Activated T-helper 1 cell treated with anti-CD3 and anti-CD28 coated beads, Interleukin-12 subunit alpha, Interleukin-12 subunit beta, Interleukin-2, Interleukin-4 antibody, amounts not matched to agents 30 ng/mL and 10 ng/mL and 1 ng/mL, durations not matched to agents 14 hours and 24 hours and 36 hours (primary cell): ENCODE measurements at regions of chr4 and their contacts with region 1.

Region 1: GRCh38 chr4:25159884-25160713 is at the start of gene SEPSECS:
- DNase-seq: peak; percentile 93
- H3K4me3 Mint-ChIP-seq: peak within 1 kb of the TSS; percentile 91
- H3K27ac Mint-ChIP-seq: peak within 1 kb of the TSS; percentile 90
- H3K4me1 Mint-ChIP-seq: peaks cover 36% of the 10 kb centered on the region
- H3K27me3 Mint-ChIP-seq: peaks cover 3% of the 10 kb centered on the region
- total RNA-seq, gene SEPSECS: 13.4 and 15.3 TPM in 2 replicates

Region 2: GRCh38 chr4:24980064-24980690 is 179.9 kb before region 1 on chr4:
- intact Hi-C with region 1: loop called (anchors 5 kb)
- DNase-seq: peak; percentile 40
- H3K4me3 Mint-ChIP-seq: no peak overlapping the region
- H3K27ac Mint-ChIP-seq: no peak overlapping the region
- H3K4me1 Mint-ChIP-seq: peaks cover 5% of the 10 kb centered on the region
- H3K27me3 Mint-ChIP-seq: peaks cover 12% of the 10 kb centered on the region

Region 3: GRCh38 chr4:25180524-25181131 is 20.5 kb after region 1 on chr4:
- intact Hi-C with region 1: loop called (anchors 1 kb)
- DNase-seq: no peak
- H3K4me3 Mint-ChIP-seq: no peak overlapping the region
- H3K27ac Mint-ChIP-seq: no peak overlapping the region
- H3K4me1 Mint-ChIP-seq: peaks cover 29% of the 10 kb centered on the region
- H3K27me3 Mint-ChIP-seq: no peaks in the 10 kb centered on the region

Region 4: DNA sequence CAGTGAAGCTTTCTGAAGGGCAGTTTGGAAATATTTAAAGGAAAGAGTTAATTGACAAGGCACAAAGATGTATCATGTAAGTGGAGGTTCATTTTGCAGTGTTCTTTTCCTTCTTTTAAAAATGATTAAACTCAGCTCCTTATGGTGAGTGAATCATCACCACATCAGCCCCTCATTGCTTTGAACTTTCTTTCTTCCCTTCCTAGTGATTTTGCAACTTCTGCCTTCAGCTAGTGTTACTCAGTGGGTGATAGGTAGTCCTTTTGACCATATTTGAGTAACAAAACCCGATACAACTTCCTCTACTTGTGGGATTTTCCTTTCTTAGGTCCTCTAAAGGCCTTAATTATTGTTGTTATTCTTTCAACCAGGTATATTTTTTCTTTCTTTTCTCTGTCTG is 160.7 kb after region 1 on chr4:
- intact Hi-C with region 1: loop called (anchors 2 kb)
- DNase-seq: no peak
- H3K4me3 Mint-ChIP-seq: peak overlapping the region; percentile 2
- H3K27ac Mint-ChIP-seq: peak overlapping the region; percentile 76
- H3K4me1 Mint-ChIP-seq: peaks cover 24% of the 10 kb centered on the region
- H3K27me3 Mint-ChIP-seq: no peaks in the 10 kb centered on the region

Region 5: DNA sequence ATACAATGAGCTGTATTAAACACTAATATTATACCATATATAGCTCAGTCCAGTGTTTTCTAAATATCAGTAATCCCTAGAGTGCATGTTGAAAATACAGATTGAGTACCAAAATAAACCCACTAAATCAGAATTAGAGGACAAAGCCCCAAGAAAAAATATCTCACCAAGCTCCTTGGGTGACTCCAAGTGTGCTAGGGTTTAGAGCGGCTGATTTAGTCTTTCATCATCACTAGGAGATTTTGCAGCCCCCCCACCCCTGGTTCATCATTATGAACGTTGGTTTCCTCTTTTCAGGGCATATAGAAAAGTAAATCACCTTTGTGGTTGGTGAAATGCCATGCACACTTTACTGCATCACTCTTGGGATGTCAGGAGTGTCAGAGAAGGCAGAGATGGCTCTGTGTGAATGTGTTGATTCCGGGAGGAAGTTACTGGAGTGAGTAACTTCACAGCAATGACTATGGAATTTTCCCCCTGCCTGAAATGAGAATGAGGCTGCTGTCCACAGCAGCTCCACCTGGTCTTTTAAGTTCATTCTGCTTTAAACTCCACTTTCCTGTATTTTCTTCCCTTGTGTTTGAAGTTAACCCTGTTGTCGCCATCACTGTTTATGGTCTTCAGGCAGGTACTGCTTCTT is 191.8 kb after region 1 on chr4:
- intact Hi-C with region 1: no loop called
- DNase-seq: no peak
- H3K4me3 Mint-ChIP-seq: no peak overlapping the region
- H3K27ac Mint-ChIP-seq: no peak overlapping the region
- H3K4me1 Mint-ChIP-seq: peaks cover under 1% of the 10 kb centered on the region
- H3K27me3 Mint-ChIP-seq: no peaks in the 10 kb centered on the region

Region 6: GRCh38 chr4:25376754-25377571 is 216.9 kb after region 1 on chr4 and contains the start of gene ANAPC4:
- intact Hi-C with region 1: loop called (anchors 1 kb)
- DNase-seq: peak; percentile 95
- H3K4me3 Mint-ChIP-seq: no peak within 1 kb of the TSS
- H3K27ac Mint-ChIP-seq: peak within 1 kb of the TSS; percentile 91
- H3K4me1 Mint-ChIP-seq: no peaks in the 10 kb centered on the region
- H3K27me3 Mint-ChIP-seq: no peaks in the 10 kb centered on the region
- total RNA-seq, gene ANAPC4: 36.0 and 39.9 TPM in 2 replicates